ENCODE measurements at regions of chr2 and their contacts with region 1.

Region 1: GRCh38 chr2:210309548-210310233 is 5.3 kb downstream of the MYL1 start:
- DNase-seq: no peak
- ATAC-seq: no peak
- H3K4me3 Mint-ChIP-seq: no peak overlapping the region
- H3K27ac Mint-ChIP-seq: no peak overlapping the region
- H3K4me1 Mint-ChIP-seq: no peaks in the 10 kb centered on the region
- H3K27me3 Mint-ChIP-seq: peaks cover 1% of the 10 kb centered on the region
- CTCF ChIP-seq: no peak

Region 2: DNA sequence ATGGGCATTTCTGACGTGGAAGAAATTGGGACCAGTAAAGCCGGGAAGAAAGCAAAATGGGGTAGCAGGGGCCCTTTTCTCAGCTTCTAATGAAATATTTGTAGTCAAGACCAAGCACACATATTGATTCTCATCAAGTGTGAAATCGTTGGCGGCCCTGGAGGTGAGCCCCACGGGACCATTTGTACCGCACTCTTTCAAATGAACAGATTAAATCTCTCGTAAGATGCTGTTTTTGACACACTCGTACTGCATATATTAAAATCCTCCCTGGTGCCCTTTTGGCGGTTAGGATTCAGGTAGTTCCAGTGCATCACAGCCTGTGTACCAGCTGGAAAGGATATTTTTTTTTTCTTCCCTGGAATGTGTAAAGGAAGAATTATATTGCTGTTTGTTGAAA is 15.2 kb after region 1 on chr2:
- CTCF ChIA-PET with region 1: no interaction called
- POLR2A ChIA-PET with region 1: no interaction called
- intact Hi-C with region 1: loop called (anchors 1 kb)
- DNase-seq: no peak
- ATAC-seq: no peak
- H3K4me3 Mint-ChIP-seq: no peak overlapping the region
- H3K27ac Mint-ChIP-seq: no peak overlapping the region
- H3K4me1 Mint-ChIP-seq: no peaks in the 10 kb centered on the region
- H3K27me3 Mint-ChIP-seq: no peaks in the 10 kb centered on the region
- CTCF ChIP-seq: no peak

Region 3: GRCh38 chr2:211423030-211423429 is 1113.3 kb after region 1 on chr2:
- CTCF ChIA-PET with region 1: no interaction called
- POLR2A ChIA-PET with region 1: no interaction called
- intact Hi-C with region 1: no loop called
- DNase-seq: no peak
- ATAC-seq: no peak
- H3K4me3 Mint-ChIP-seq: no peak overlapping the region
- H3K27ac Mint-ChIP-seq: no peak overlapping the region
- H3K4me1 Mint-ChIP-seq: peaks cover 5% of the 10 kb centered on the region
- H3K27me3 Mint-ChIP-seq: no peaks in the 10 kb centered on the region
- CTCF ChIP-seq: no peak

Measured in activated B cell treated with CpG ODN at 0.5 μM for 24 hours (primary cell).